GM12878 (cell line): ENCODE measurements at regions of chr3 and their contacts with region 1.

Region 1: GRCh38 chr3:142028243-142028777 is 121.0 kb downstream of the TFDP2 start:
- DNase-seq: peak; percentile 71
- ATAC-seq: peak; percentile 88
- H3K4me3 ChIP-seq: peak overlapping the region; percentile 68
- H3K27ac ChIP-seq: peak overlapping the region; percentile 39
- H3K4me1 ChIP-seq: peaks cover 4% of the 10 kb centered on the region; the same call in 1 of the 2 replicates
- H3K27me3 ChIP-seq: no peaks in the 10 kb centered on the region
- CTCF ChIP-seq: no peak
- EP300 ChIP-seq: no peak
- POLR2A ChIP-seq: peak; percentile 37; the same call in 1 of the 2 replicates
- RAD21 ChIP-seq: no peak

Region 2: DNA sequence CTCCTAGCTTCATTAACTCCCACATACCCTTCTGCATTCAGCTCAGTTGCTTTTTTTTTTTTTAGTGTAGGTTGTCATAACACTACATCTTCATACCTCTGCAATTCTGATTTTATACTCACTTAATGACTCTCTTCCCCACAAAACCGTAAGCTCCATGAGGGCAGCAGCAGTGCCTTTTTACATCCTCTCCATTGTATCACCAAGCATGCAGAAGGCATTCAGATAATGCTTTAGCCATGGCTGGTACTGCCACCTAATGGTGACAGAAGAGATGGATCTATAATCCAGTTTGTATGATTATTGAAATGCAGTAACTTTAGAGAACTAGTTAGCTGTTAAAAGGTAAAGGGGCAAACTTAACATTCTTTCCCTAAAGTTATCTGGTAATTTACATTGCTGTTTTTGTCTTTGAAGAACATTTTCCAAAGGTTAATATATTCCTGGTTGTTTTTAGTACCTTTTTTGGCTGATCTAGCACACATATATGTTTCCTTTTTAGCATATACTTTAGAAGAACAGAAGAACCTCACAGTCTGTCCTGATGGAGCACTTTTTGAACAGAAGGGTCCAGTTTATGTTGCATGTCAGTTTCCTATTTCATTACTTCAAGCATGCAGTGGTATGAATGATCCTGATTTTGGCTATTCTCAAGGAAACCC is 115.0 kb before region 1 on chr3:
- CTCF ChIA-PET with region 1: no interaction called
- POLR2A ChIA-PET with region 1: no interaction called
- RAD21 ChIA-PET with region 1: no interaction called
- SMC1A ChIA-PET with region 1: no interaction called
- in situ Hi-C with region 1: no loop called
- intact Hi-C with region 1: no loop called
- DNase-seq: peak; percentile 19
- ATAC-seq: peak; percentile 89
- H3K4me3 ChIP-seq: no peak overlapping the region
- H3K27ac ChIP-seq: no peak overlapping the region
- H3K4me1 ChIP-seq: no peaks in the 10 kb centered on the region
- H3K27me3 ChIP-seq: no peaks in the 10 kb centered on the region
- CTCF ChIP-seq: peak; percentile 60 to 74 (median 62)
- EP300 ChIP-seq: no peak
- POLR2A ChIP-seq: no peak
- RAD21 ChIP-seq: peak; percentile 78

Region 3: DNA sequence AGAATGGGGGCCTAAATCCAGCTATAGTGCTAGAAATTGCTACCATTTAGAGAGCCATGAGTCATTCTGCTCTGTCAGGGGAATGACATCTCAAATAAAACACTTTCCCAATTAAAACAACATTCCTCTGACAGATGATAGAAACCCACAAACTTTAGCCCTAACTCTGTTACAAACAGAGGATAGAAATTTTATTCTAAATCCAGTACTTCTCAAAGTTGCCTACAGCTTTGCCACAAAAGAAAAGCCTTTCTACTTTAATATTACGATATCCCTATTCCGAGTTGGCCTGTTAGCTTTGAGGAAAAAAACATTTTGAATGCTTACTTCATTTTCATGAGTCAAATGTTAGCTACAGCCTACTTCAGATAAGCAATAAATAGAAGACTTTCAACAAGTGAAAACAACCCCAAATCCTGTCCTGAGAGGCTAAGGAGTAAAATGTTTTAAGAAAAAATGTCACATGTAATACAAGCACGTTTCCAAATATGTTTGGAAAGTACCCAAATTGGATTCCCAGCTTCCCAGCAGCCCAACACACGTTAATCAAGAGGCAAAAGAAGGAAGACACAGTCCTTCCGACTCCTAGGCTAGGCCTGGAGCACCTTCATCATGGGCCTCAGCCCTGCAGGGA is 68.3 kb before region 1 on chr3:
- CTCF ChIA-PET with region 1: interaction called, 10 read pairs
- POLR2A ChIA-PET with region 1: no interaction called
- RAD21 ChIA-PET with region 1: no interaction called
- SMC1A ChIA-PET with region 1: interaction called, 3 read pairs
- in situ Hi-C with region 1: no loop called
- intact Hi-C with region 1: loop called (anchors 5 kb)
- DNase-seq: no peak
- ATAC-seq: no peak
- H3K4me3 ChIP-seq: no peak overlapping the region
- H3K27ac ChIP-seq: no peak overlapping the region
- H3K4me1 ChIP-seq: no peaks in the 10 kb centered on the region
- H3K27me3 ChIP-seq: no peaks in the 10 kb centered on the region
- CTCF ChIP-seq: no peak
- EP300 ChIP-seq: no peak
- POLR2A ChIP-seq: no peak
- RAD21 ChIP-seq: no peak

Region 4: DNA sequence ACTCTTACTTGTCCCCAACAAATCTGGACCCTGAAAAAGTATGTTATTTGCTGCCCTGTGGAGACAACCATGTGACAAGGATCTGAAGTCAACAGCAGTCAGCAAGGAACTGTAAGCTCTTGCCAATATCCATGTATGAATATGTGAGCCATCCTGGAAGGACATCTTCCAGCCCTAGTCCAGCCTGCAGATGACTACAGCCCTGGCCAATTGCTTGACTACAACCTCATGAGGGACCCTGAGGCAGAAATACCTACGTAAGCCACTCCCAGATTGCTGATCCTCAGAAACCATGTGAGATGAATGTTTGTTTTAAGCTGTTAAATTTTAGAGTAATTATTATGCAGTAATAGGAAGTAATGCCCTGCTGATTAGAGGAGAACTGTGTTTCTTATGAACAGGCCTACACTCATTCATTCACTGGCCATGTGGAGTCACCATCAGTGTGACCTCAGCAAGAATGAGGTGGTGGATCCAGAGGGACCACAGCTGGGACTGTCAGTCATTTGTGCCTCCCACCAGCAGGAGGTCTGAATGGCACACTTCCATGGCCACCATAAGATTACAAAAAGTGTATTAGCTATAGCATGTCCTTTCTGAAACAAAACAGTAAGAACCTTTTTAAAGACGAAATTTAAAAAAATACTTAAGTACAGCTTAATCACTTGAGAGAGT is 28.5 kb after region 1 on chr3:
- CTCF ChIA-PET with region 1: no interaction called
- POLR2A ChIA-PET with region 1: no interaction called
- RAD21 ChIA-PET with region 1: no interaction called
- SMC1A ChIA-PET with region 1: interaction called, 12 read pairs
- in situ Hi-C with region 1: no loop called
- intact Hi-C with region 1: no loop called
- DNase-seq: no peak
- ATAC-seq: no peak
- H3K4me3 ChIP-seq: no peak overlapping the region
- H3K27ac ChIP-seq: no peak overlapping the region
- H3K4me1 ChIP-seq: no peaks in the 10 kb centered on the region
- H3K27me3 ChIP-seq: no peaks in the 10 kb centered on the region
- CTCF ChIP-seq: no peak
- EP300 ChIP-seq: no peak
- POLR2A ChIP-seq: no peak
- RAD21 ChIP-seq: no peak

Region 5: DNA sequence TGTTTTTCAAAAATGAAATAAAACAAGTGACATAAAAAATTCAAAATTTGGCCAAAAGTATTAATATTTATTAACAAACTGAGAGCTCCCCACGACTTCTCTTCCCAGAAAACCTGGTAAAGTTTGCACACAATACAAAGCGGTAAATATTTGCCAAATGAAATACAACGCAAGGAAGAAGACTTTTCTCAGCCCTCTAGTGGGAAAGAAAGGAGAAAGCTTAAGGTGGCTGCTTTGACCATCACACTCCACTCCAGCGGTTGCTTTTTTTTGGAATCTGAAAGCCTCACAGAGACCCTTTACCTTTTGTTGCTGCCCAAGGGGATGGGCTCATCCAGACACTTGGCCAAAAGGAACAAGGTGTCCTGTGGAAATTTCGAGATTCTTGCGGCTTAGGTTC is 198.2 kb after region 1 on chr3:
- CTCF ChIA-PET with region 1: interaction called, 6 read pairs
- POLR2A ChIA-PET with region 1: no interaction called
- RAD21 ChIA-PET with region 1: interaction called, 4 read pairs
- SMC1A ChIA-PET with region 1: no interaction called
- in situ Hi-C with region 1: no loop called
- intact Hi-C with region 1: loop called (anchors 5 kb)
- DNase-seq: no peak
- ATAC-seq: no peak
- H3K4me3 ChIP-seq: no peak overlapping the region
- H3K27ac ChIP-seq: no peak overlapping the region
- H3K4me1 ChIP-seq: peaks cover 4% of the 10 kb centered on the region; the same call in 1 of the 2 replicates
- H3K27me3 ChIP-seq: no peaks in the 10 kb centered on the region
- CTCF ChIP-seq: no peak
- EP300 ChIP-seq: no peak
- POLR2A ChIP-seq: no peak
- RAD21 ChIP-seq: no peak

Region 6: DNA sequence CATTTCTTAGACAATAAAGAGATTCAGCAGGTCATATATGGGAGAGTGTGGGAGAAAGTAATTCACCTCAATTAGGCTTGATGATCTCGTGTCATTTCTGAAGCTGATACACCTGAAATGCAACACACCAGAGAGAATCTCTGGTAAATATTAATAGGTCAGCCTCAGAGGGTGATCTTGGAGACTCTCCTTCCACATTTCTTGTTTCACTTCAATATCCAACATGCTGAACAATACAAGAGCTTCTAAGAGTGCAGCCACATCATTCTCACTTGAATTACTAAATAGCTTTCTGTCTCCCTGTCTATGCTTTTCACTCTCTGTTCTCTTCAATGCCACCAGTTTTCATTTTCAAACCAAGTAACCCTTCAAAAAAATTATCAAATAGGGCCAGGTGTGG is 268.2 kb after region 1 on chr3:
- CTCF ChIA-PET with region 1: no interaction called
- POLR2A ChIA-PET with region 1: no interaction called
- RAD21 ChIA-PET with region 1: no interaction called
- SMC1A ChIA-PET with region 1: no interaction called
- in situ Hi-C with region 1: no loop called
- intact Hi-C with region 1: no loop called
- DNase-seq: peak; percentile 2
- ATAC-seq: peak; percentile 31; the same call in 2 of the 3 replicates
- H3K4me3 ChIP-seq: no peak overlapping the region
- H3K27ac ChIP-seq: no peak overlapping the region
- H3K4me1 ChIP-seq: no peaks in the 10 kb centered on the region
- H3K27me3 ChIP-seq: no peaks in the 10 kb centered on the region
- CTCF ChIP-seq: no peak
- EP300 ChIP-seq: no peak
- POLR2A ChIP-seq: no peak
- RAD21 ChIP-seq: no peak